ENCODE measurements at regions of chr6 and their contacts with region 1.

Region 1: DNA sequence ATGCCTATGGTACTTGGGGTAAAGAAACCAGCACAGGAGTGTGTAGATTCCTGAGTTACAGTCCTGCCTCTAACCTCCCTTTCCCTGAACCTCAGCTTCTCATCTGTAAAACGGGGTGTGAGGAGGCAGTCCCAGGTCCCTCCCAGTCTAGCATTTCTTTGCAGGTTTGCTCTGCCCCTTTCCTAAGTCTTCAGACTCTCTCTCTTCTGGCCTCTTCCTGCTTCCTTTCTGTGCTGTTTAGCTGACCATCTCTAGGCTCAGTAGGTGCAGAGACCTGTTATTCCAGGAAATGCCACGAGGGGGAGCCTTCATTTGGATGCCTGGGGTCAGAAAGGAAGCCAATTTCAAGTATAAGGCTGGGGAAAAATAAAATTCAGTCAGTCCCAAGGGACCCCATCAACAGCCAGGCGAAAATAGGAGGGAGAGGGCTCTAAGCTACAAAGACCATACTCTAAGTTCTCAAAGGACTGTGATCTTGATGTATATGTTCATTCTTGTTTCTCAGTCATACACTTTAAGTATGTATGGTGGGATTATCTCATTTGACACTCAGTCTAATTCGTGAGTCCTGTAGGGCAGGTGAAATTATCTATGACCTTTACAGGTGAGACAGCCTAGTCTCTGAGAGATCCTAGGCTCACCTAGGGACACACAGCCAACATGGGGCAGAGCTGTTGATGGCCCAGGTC is 89.1 kb downstream of the NCR2 start:
- DNase-seq: peak; percentile 47 to 93
- H3K4me3 ChIP-seq: no peak overlapping the region
- H3K27ac ChIP-seq: no peak overlapping the region
- H3K4me1 ChIP-seq: peaks cover 4 to 27% of the 10 kb centered on the region in 2 donors
- H3K27me3 ChIP-seq: no peaks in the 10 kb centered on the region
- CTCF ChIP-seq: peak; percentile 66 to 91 (median 85)

Region 2: GRCh38 chr6:41367700-41368099 is 56.8 kb before region 1 on chr6:
- intact Hi-C with region 1: loop called (anchors 2 kb)
- DNase-seq: no peak
- H3K4me3 ChIP-seq: no peak overlapping the region
- H3K27ac ChIP-seq: no peak overlapping the region
- H3K4me1 ChIP-seq: peaks cover 3 to 5% of the 10 kb centered on the region in 2 donors
- H3K27me3 ChIP-seq: peaks cover 5% of the 10 kb centered on the region
- CTCF ChIP-seq: peak in 2 of 3 experiments; percentile 18 to 34

Region 3: GRCh38 chr6:41463062-41463930 is 38.8 kb after region 1 on chr6:
- intact Hi-C with region 1: loop called (anchors 2 kb)
- DNase-seq: peak; percentile 14 to 81
- H3K4me3 ChIP-seq: no peak overlapping the region
- H3K27ac ChIP-seq: no peak overlapping the region
- H3K4me1 ChIP-seq: no peaks in the 10 kb centered on the region
- H3K27me3 ChIP-seq: no peaks in the 10 kb centered on the region
- CTCF ChIP-seq: peak; percentile 53 to 73 (median 59)

Region 4: DNA sequence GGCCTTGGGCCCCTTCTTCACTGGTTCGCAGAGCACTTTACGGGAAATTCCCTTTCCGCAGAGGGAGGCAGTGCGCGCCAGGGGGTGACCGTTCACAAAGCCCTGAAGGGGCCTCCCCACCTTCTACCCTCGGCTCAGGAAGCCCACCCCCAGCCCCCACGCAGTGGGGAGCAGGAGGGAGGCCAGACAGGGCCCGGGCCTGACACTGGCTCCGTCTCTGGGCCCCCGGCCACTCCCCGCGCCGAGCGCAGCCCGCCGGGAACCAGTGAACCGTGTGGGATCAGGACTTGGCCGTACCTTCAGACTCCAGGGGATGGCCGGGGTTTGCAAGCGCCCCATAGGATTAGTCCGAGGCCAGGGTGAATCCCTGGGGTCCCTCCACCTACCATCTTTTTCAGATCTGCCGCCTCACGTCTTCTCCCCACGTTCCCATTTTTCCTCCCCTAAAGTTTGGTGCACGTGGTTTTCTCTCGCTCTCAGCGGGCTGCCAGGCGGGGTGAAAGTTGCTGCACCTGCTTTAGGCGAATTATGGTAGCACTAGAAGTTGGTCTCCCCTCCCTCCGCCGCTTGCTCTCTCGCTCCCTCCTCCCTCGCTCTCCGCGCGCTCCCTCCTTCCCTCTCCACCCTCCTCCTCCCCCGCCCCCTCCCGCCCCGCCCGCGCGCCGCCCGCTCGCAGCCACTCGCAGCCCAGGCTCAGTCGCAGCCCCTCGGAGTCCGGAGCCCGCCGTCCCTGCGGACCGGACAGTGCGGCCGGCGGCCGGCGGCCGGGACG is 121.4 kb after region 1 on chr6 and contains the start of gene FOXP4:
- intact Hi-C with region 1: loop called (anchors 1 kb)
- DNase-seq: peak; percentile 49 to 93
- H3K4me3 ChIP-seq: peak within 1 kb of the TSS; percentile 75 to 95
- H3K27ac ChIP-seq: peak within 1 kb of the TSS; percentile 50 to 92
- H3K4me1 ChIP-seq: peaks cover 11 to 16% of the 10 kb centered on the region in 2 donors
- H3K27me3 ChIP-seq: no peaks in the 10 kb centered on the region
- CTCF ChIP-seq: no peak
- total RNA-seq, gene FOXP4: 19.5 TPM

Region 5: GRCh38 chr6:41683510-41684310 is 259.2 kb after region 1 on chr6:
- intact Hi-C with region 1: loop called (anchors 5 kb)
- DNase-seq: peak in 1 of 2 donors; percentile 86
- H3K4me3 ChIP-seq: peak overlapping the region; percentile 53 to 64
- H3K27ac ChIP-seq: peak overlapping the region; percentile 33 to 52
- H3K4me1 ChIP-seq: peaks cover 5 to 14% of the 10 kb centered on the region in 2 donors
- H3K27me3 ChIP-seq: no peaks in the 10 kb centered on the region
- CTCF ChIP-seq: peak; percentile 73 to 94 (median 92)

Measured in ascending aorta (tissue), 2 donors.